ENCODE measurements at regions of chr16 and their contacts with region 1.

Region 1: DNA sequence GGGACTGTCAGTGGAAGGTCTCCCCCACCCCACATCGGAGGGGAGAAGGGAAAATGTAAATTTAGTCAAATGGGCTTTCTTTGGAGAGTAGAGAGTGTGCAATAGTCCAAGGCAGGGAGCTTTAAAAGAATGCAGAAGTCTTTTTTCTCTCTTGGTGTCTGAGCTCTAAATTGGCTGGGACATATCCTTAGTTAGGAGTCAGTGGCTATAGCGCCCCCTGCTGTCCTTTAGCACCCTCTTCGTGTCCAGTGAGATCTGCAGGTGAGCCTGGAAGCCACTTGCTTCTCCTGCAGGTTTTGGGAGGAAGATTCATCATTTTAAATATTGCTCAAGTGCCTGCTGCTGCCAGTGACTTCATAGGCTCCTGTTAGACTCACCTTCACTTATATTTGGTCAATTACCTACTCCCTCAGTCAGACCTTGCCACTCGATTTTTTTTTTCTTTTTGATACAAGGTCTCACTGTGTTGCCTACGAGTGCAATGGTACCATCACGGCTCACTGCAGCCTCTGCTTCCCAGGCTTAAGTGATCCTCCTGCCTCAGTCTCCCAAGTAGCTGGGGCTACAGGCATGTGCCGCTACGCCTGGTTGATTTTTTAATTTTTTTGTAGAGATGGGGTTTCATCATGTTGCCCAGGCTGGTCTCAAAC is 174.8 kb downstream of the PRKCB start:
- DNase-seq: peak; percentile 71 to 89 (median 86)
- ATAC-seq: peak; percentile 62 to 79
- H3K4me3 ChIP-seq: no peak overlapping the region
- H3K27ac ChIP-seq: no peak overlapping the region
- H3K4me1 ChIP-seq: no peaks in the 10 kb centered on the region
- H3K27me3 ChIP-seq: no peaks in the 10 kb centered on the region

Region 2: GRCh38 chr16:23729503-23730424 is 280.8 kb before region 1 on chr16:
- intact Hi-C with region 1: loop called in 1 of 4 experiments (anchors 10 kb)
- DNase-seq: no peak
- ATAC-seq: peak in 1 of 2 donors; percentile 33
- H3K4me3 ChIP-seq: no peak overlapping the region
- H3K27ac ChIP-seq: no peak overlapping the region
- H3K4me1 ChIP-seq: peaks cover 1% of the 10 kb centered on the region
- H3K27me3 ChIP-seq: no peaks in the 10 kb centered on the region

Region 3: GRCh38 chr16:23803591-23804123 is 206.9 kb before region 1 on chr16:
- intact Hi-C with region 1: loop called in 2 of 4 experiments (anchors 5 to 10 kb)
- DNase-seq: peak; percentile 52 to 70 (median 65)
- ATAC-seq: peak in 1 of 2 donors; percentile 78
- H3K4me3 ChIP-seq: no peak overlapping the region
- H3K27ac ChIP-seq: no peak overlapping the region
- H3K4me1 ChIP-seq: no peaks in the 10 kb centered on the region
- H3K27me3 ChIP-seq: no peaks in the 10 kb centered on the region

Region 4: GRCh38 chr16:24070851-24071250 is 60.3 kb after region 1 on chr16:
- intact Hi-C with region 1: no loop called
- DNase-seq: peak in 1 of 3 donors; percentile 16
- ATAC-seq: peak in 1 of 2 donors; percentile 39
- H3K4me3 ChIP-seq: no peak overlapping the region
- H3K27ac ChIP-seq: no peak overlapping the region
- H3K4me1 ChIP-seq: no peaks in the 10 kb centered on the region
- H3K27me3 ChIP-seq: no peaks in the 10 kb centered on the region

Measured in right cardiac atrium (tissue), 5 donors.